Natural killer cell (primary cell): ENCODE measurements at regions of chr4 and their contacts with region 1.

Region 1: GRCh38 chr4:152535903-152536544 is at the start of gene FBXW7:
- DNase-seq: peak; percentile 99
- ATAC-seq: peak; percentile 81 to 94 (median 83)
- H3K4me3 ChIP-seq: peak within 1 kb of the TSS; percentile 95
- H3K4me3 Mint-ChIP-seq: peak within 1 kb of the TSS; percentile 99
- H3K27ac ChIP-seq: peak within 1 kb of the TSS; percentile 98
- H3K27ac Mint-ChIP-seq: peak within 1 kb of the TSS; percentile 93 to 99
- H3K4me1 ChIP-seq: peaks cover 18% of the 10 kb centered on the region
- H3K4me1 Mint-ChIP-seq: peaks cover 67% of the 10 kb centered on the region in 2 donors
- H3K27me3 ChIP-seq: no peaks in the 10 kb centered on the region
- H3K27me3 Mint-ChIP-seq: no peaks in the 10 kb centered on the region
- CTCF ChIP-seq: no peak
- total RNA-seq, gene FBXW7: 172 to 202 (median 175) TPM

Region 2: GRCh38 chr4:151099229-151099975 is 1436.6 kb before region 1 on chr4 and contains the start of gene RPS3A:
- intact Hi-C with region 1: loop called (anchors 2 kb)
- DNase-seq: peak; percentile 99
- ATAC-seq: peak; percentile 92 to 99 (median 93)
- H3K4me3 ChIP-seq: peak within 1 kb of the TSS; percentile 77
- H3K4me3 Mint-ChIP-seq: peak within 1 kb of the TSS; percentile 97
- H3K27ac ChIP-seq: peak within 1 kb of the TSS; percentile 87
- H3K27ac Mint-ChIP-seq: peak within 1 kb of the TSS; percentile 94 to 95
- H3K4me1 ChIP-seq: peaks cover 14% of the 10 kb centered on the region
- H3K4me1 Mint-ChIP-seq: peaks cover 30 to 38% of the 10 kb centered on the region in 2 donors
- H3K27me3 ChIP-seq: no peaks in the 10 kb centered on the region
- H3K27me3 Mint-ChIP-seq: peaks cover 10 to 13% of the 10 kb centered on the region in 2 donors
- CTCF ChIP-seq: peak; percentile 77
- total RNA-seq, gene RPS3A: 1,074 to 1,354 (median 1,315) TPM

Region 3: GRCh38 chr4:152382057-152382785 is 153.8 kb before region 1 on chr4:
- intact Hi-C with region 1: no loop called
- DNase-seq: peak in 1 of 2 donors; percentile 41
- ATAC-seq: peak; percentile 29 to 57 (median 50)
- H3K4me3 ChIP-seq: no peak overlapping the region
- H3K4me3 Mint-ChIP-seq: peak overlapping the region; percentile 70
- H3K27ac ChIP-seq: peak overlapping the region; percentile 34
- H3K27ac Mint-ChIP-seq: peak overlapping the region; percentile 74 to 87
- H3K4me1 ChIP-seq: no peaks in the 10 kb centered on the region
- H3K4me1 Mint-ChIP-seq: peaks cover 20 to 31% of the 10 kb centered on the region in 2 donors
- H3K27me3 ChIP-seq: no peaks in the 10 kb centered on the region
- H3K27me3 Mint-ChIP-seq: no peaks in the 10 kb centered on the region
- CTCF ChIP-seq: no peak

Region 4: GRCh38 chr4:152454398-152455011 is 81.5 kb before region 1 on chr4:
- intact Hi-C with region 1: loop called (anchors 5 kb)
- DNase-seq: peak in 1 of 2 donors; percentile 11
- ATAC-seq: peak in 1 of 3 donors; percentile 28
- H3K4me3 ChIP-seq: no peak overlapping the region
- H3K4me3 Mint-ChIP-seq: peak overlapping the region; percentile 38
- H3K27ac ChIP-seq: no peak overlapping the region
- H3K27ac Mint-ChIP-seq: no peak overlapping the region
- H3K4me1 ChIP-seq: peaks cover 12% of the 10 kb centered on the region
- H3K4me1 Mint-ChIP-seq: peaks cover 39 to 47% of the 10 kb centered on the region in 2 donors
- H3K27me3 ChIP-seq: no peaks in the 10 kb centered on the region
- H3K27me3 Mint-ChIP-seq: no peaks in the 10 kb centered on the region
- CTCF ChIP-seq: peak; percentile 44

Region 5: GRCh38 chr4:152485726-152486276 is 50.2 kb before region 1 on chr4:
- intact Hi-C with region 1: loop called (anchors 1 kb)
- DNase-seq: peak in 1 of 2 donors; percentile 70
- ATAC-seq: peak; percentile 97 to 98 (median 97)
- H3K4me3 ChIP-seq: no peak overlapping the region
- H3K4me3 Mint-ChIP-seq: peak overlapping the region; percentile 50
- H3K27ac ChIP-seq: no peak overlapping the region
- H3K27ac Mint-ChIP-seq: peak overlapping the region; percentile 15 to 58
- H3K4me1 ChIP-seq: no peaks in the 10 kb centered on the region
- H3K4me1 Mint-ChIP-seq: peaks cover 43 to 71% of the 10 kb centered on the region in 2 donors
- H3K27me3 ChIP-seq: no peaks in the 10 kb centered on the region
- H3K27me3 Mint-ChIP-seq: no peaks in the 10 kb centered on the region
- CTCF ChIP-seq: no peak

Region 6: DNA sequence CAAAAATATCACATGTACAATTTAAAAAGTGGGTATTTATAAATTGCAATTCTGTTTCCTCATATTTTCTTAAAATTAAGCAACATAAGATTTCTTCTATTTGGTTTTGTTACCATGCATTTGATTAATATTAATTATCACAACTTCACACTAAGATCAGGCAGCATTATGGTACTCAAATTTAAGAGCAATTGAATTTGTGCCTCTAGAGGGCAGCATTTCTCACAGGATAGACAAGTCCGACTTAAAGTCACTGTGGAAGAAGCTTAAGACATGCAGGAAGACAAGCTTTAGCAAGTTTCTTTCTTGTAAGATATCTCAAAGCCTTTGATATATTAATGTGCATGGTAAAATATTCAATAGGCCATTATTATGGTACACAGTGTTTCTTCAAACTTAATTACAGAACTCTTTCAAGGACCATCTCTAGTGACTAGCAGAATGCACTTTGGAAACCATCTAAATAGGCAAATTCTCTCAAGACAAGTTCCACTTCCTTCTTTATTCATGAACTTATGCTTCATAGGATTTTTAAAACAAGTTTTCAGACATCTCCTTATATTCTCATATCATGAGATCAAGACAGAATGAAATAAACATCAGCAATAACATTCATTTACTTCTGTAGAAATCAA is 35.1 kb before region 1 on chr4:
- intact Hi-C with region 1: loop called (anchors 5 kb)
- DNase-seq: peak in 1 of 2 donors; percentile 92
- ATAC-seq: peak; percentile 82 to 89 (median 88)
- H3K4me3 ChIP-seq: no peak overlapping the region
- H3K4me3 Mint-ChIP-seq: no peak overlapping the region
- H3K27ac ChIP-seq: no peak overlapping the region
- H3K27ac Mint-ChIP-seq: peak overlapping the region in 1 of 2 donors; percentile 60
- H3K4me1 ChIP-seq: peaks cover 4% of the 10 kb centered on the region
- H3K4me1 Mint-ChIP-seq: peaks cover 44 to 48% of the 10 kb centered on the region in 2 donors
- H3K27me3 ChIP-seq: no peaks in the 10 kb centered on the region
- H3K27me3 Mint-ChIP-seq: no peaks in the 10 kb centered on the region
- CTCF ChIP-seq: peak; percentile 91

Region 7: DNA sequence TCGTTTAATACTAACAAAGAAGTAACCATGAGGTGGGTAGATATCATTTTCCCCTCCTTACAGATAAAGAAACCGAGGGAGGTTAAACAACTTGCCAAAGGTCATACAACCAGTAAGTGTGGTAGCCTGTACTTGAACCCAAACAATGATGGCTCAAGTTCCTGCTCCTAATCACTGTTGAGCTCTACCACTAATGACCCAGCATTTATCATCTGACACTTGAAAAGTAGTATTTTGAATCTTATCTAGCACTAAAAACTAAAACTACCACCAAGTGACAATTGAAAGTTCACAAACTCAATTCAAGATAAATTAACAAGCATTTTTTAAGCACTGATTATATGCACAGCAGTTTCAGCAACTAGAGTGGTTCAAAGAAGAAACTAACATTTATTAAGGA is 13.3 kb before region 1 on chr4:
- intact Hi-C with region 1: loop called (anchors 2 kb)
- DNase-seq: no peak
- ATAC-seq: no peak
- H3K4me3 ChIP-seq: no peak overlapping the region
- H3K4me3 Mint-ChIP-seq: peak overlapping the region; percentile 67
- H3K27ac ChIP-seq: no peak overlapping the region
- H3K27ac Mint-ChIP-seq: peak overlapping the region; percentile 56 to 68
- H3K4me1 ChIP-seq: peaks cover 3% of the 10 kb centered on the region
- H3K4me1 Mint-ChIP-seq: peaks cover 69 to 74% of the 10 kb centered on the region in 2 donors
- H3K27me3 ChIP-seq: no peaks in the 10 kb centered on the region
- H3K27me3 Mint-ChIP-seq: no peaks in the 10 kb centered on the region
- CTCF ChIP-seq: no peak

Region 8: GRCh38 chr4:152779513-152780266 is 243.7 kb after region 1 on chr4 and contains the starts of genes ARFIP1 and TIGD4:
- intact Hi-C with region 1: loop called (anchors 1 kb)
- DNase-seq: peak; percentile 90 to 96
- ATAC-seq: peak; percentile 86 to 95 (median 90)
- H3K4me3 ChIP-seq: peak within 1 kb of the TSS; percentile 78
- H3K4me3 Mint-ChIP-seq: peak within 1 kb of the TSS; percentile 99
- H3K27ac ChIP-seq: peak within 1 kb of the TSS; percentile 73
- H3K27ac Mint-ChIP-seq: peak within 1 kb of the TSS; percentile 95 to 99
- H3K4me1 ChIP-seq: peaks cover 12% of the 10 kb centered on the region
- H3K4me1 Mint-ChIP-seq: peaks cover 54 to 55% of the 10 kb centered on the region in 2 donors
- H3K27me3 ChIP-seq: no peaks in the 10 kb centered on the region
- H3K27me3 Mint-ChIP-seq: peaks cover 5 to 18% of the 10 kb centered on the region in 2 donors
- CTCF ChIP-seq: no peak
- total RNA-seq, gene ARFIP1: 13.7 to 20.6 (median 14.6) TPM
- total RNA-seq, gene TIGD4: not detected